Activated naive CD4-positive, alpha-beta T cell treated with anti-CD3 and anti-CD28 coated beads for 36 hours (primary cell): ENCODE measurements at regions of chr16 and their contacts with region 1.

Region 1: DNA sequence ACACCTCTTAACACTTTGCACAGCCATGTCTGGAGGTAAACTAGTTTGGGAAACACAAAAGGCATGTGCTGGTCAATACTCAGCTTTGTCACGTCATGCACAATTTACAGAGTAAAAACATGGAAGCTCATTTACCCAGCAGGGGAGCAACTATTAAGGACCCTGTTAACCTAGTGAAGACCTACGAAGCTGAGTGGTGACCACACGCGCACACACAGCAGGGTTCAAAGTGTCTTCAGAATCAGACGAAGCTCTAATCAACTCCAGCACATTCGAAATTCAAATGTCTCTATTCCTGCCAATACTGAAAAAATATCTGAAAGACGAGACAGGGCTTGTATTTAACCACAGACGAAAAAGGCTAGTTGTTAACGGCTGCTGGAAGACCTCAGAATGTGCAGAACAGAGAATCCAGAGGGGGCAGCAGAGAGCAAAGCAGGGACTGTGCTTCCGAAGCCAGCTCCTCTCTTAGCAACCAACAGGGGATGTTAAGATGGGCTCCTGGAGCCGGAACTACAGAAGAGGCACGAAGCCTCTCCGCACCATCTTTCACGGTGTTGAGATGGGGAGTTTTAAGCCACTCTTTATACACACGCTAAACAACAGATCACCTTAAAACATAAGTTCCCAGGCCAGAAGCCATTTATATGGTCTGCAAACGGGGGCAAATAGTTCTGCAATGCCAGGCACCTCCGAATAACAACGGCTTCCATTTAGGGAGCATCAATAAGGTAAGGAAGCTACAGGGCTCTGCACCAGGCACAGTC is 45.7 kb downstream of the CMTM4 start:
- DNase-seq: peak; percentile 93
- H3K4me3 Mint-ChIP-seq: peak overlapping the region; percentile 68
- H3K27ac Mint-ChIP-seq: no peak overlapping the region
- H3K4me1 Mint-ChIP-seq: peaks cover 13% of the 10 kb centered on the region
- H3K27me3 Mint-ChIP-seq: no peaks in the 10 kb centered on the region

Region 2: GRCh38 chr16:66608241-66609138 is 42.4 kb before region 1 on chr16:
- CTCF ChIA-PET with region 1: interaction called, 17 read pairs
- intact Hi-C with region 1: loop called (anchors 1 kb)
- DNase-seq: peak; percentile 89
- H3K4me3 Mint-ChIP-seq: no peak overlapping the region
- H3K27ac Mint-ChIP-seq: no peak overlapping the region
- H3K4me1 Mint-ChIP-seq: peaks cover 33% of the 10 kb centered on the region
- H3K27me3 Mint-ChIP-seq: no peaks in the 10 kb centered on the region

Region 3: DNA sequence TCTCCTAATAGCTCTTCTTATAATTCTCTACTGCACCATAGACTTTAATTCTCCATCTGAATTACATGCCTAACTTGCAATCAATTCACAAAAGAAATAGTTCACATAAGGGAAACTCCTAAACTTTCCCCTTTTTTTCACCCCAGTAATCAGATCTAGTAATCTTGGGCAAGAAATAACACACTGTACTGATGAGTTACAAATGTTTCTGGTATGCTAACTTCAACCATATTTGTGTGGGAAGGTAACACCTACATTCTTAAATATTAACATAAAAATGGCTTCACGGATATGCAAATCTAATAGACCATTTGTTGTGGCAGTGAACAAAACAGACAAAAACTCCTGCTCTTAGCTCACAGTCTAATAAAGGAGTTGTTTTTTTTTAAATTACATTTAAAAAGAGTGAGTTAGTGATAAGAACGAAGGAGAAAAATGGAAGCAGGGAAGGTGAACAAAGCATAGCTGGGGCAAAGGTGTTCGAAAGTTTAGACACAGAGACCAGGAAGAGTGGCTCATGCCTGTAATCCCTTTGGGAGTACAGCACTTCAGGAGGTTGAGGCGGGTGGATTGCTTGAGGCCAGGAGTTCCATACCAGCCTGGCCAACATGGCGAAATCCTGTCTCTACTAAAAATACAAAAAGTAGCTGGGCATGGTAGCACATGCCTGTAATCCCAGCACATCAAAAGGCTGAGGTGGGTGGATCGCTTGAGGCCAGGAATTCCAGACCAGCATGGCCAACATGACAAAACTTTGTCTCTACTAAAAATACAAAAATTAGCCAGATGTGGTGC is 11.6 kb before region 1 on chr16:
- CTCF ChIA-PET with region 1: interaction called, 12 read pairs
- intact Hi-C with region 1: no loop called
- DNase-seq: no peak
- H3K4me3 Mint-ChIP-seq: no peak overlapping the region
- H3K27ac Mint-ChIP-seq: no peak overlapping the region
- H3K4me1 Mint-ChIP-seq: no peaks in the 10 kb centered on the region
- H3K27me3 Mint-ChIP-seq: no peaks in the 10 kb centered on the region

Region 4: DNA sequence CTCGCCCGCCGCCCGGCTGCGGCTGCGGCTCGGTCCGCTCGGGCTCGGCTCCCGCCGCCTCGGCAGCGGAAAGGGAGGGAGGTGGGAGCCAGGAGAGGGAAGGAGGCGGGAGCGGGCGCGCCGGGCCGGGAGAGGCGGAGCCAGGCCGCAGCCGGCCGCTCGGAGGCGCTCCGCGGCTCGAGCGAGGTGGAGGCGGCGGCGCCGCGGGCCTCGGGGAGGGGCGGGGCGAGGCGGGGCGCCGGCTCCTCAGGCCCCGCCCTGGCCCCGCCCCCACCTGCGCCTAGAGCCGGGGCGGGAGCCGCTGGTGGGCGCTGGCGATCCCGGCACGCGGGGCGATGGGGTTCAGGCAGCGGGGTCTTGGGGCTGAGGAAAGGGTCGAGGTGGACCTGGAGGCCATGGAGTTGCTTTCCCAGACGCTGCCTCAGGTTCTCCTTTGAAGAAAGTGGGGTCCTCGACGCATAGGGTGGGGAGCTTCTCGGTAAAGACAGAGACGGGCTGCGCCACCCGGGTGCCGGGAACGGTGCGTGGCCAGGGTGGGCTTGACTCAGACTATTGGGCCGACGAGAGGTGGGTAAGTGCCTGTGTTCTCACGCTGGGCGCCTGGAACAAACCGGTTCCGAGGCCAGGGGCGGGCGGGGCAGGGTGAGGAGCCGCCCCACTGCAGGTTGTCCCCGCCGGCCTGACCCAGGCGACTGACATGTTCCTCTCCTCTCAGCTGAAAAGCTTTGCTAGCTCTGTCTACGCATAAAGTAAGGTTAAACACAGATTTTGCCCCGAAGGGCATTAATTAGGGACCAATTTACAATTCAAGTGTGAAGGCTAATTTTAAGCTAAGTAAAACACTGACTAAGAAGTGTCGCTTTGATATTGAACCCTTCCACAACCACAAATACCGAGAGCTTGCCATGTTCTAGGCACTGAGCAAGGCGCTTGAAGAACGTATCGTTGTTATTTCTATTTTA is 46.1 kb after region 1 on chr16 and contains the start of gene CMTM4:
- CTCF ChIA-PET with region 1: interaction called, 8 read pairs
- intact Hi-C with region 1: loop called (anchors 1 kb)
- DNase-seq: peak; percentile 78
- H3K4me3 Mint-ChIP-seq: peak within 1 kb of the TSS; percentile 76
- H3K27ac Mint-ChIP-seq: no peak within 1 kb of the TSS
- H3K4me1 Mint-ChIP-seq: peaks cover 4% of the 10 kb centered on the region
- H3K27me3 Mint-ChIP-seq: peaks cover 6% of the 10 kb centered on the region
- total RNA-seq, gene CMTM4: 4.6 to 4.7 TPM

Region 5: DNA sequence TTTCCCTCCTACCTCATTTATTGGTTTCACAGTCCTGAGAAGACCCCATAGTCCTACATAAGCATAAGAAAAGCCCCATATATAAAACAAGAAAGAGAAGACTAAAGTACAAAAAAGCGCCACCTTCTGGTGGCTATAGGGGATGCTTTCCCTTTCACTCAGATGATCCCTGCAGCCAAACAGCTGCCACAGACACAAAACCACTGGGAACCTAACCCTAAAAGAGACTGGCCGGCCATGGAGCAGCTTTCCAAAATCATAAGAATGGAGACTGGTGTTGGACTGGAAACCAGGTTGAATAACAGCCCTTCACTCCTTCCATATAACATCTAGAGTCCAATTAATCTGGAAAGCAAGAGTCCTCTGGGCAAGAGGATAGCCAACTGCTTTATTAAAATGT is 89.1 kb after region 1 on chr16:
- CTCF ChIA-PET with region 1: interaction called, 11 read pairs
- intact Hi-C with region 1: no loop called
- DNase-seq: peak; percentile 50
- H3K4me3 Mint-ChIP-seq: no peak overlapping the region
- H3K27ac Mint-ChIP-seq: no peak overlapping the region
- H3K4me1 Mint-ChIP-seq: peaks cover 12% of the 10 kb centered on the region
- H3K27me3 Mint-ChIP-seq: no peaks in the 10 kb centered on the region